ENCODE measurements at regions of chr5 and their contacts with region 1.

Region 1: DNA sequence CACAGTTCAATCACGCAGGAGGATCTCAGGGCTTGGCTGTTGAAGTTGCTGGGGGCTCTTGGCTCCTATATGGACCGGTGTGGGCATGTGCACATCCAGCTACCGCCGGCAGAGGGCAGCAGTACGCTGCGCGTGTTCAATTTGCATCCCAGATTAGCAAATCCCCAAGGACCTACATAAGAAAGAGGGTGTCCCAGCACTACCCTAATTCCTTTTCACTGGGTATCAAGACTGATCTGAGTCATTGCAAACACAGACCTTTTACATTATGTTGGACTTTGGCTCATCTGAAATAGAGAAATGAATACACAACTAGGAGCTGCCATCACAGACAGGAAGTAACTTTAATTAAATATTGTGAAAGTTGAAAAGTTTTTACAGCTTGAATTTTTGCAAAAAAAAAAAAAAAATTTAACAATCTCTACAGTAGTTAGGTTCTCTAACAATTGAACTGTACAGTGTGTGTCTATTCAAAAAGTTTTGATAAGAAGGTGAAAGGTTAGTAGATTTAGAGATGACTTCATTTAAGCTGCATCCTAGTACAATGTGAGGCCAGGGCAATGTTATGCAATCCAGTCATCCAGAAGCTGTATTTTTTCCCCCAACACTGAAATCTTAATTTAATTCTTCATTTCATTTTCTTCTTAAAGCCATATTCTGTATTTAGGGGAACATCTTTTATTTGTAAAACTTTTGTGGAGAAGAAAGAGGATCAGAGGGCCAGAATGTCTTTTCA is 404.0 kb downstream of the EBF1 start:
- DNase-seq: peak; percentile 68 to 70
- H3K4me3 ChIP-seq: no peak overlapping the region
- H3K27ac ChIP-seq: no peak overlapping the region
- H3K4me1 ChIP-seq: peaks cover 0 to 7% of the 10 kb centered on the region in 2 donors
- H3K27me3 ChIP-seq: no peaks in the 10 kb centered on the region
- CTCF ChIP-seq: peak; percentile 88 to 96 (median 92)
- POLR2A ChIP-seq: no peak

Region 2: GRCh38 chr5:158174918-158175851 is 520.6 kb before region 1 on chr5:
- intact Hi-C with region 1: loop called (anchors 10 kb)
- DNase-seq: peak; percentile 63 to 72
- H3K4me3 ChIP-seq: no peak overlapping the region
- H3K27ac ChIP-seq: no peak overlapping the region
- H3K4me1 ChIP-seq: no peaks in the 10 kb centered on the region
- H3K27me3 ChIP-seq: no peaks in the 10 kb centered on the region
- CTCF ChIP-seq: peak; percentile 33 to 87 (median 63)
- POLR2A ChIP-seq: no peak

Region 3: DNA sequence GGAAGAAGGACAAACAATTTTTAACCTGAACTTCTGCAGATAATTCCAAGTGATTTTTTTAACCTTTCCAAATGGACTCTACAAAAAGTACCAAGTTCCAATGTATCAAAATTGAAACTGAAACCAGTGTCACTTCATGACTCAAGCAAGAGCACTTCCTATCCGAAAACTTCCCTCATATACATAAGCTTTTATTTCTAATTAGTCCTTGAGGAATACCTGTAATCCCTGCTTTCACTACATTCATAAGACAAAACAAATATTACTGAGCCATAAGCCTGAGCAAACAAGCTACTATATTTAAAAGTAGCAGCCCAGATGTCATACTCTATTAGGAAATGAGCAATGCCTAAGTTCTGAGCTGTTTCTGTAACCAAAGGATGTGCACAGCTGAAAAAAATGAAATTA is 179.5 kb after region 1 on chr5:
- intact Hi-C with region 1: no loop called
- DNase-seq: no peak
- H3K4me3 ChIP-seq: no peak overlapping the region
- H3K27ac ChIP-seq: peak overlapping the region in 1 of 3 donors; percentile 48
- H3K4me1 ChIP-seq: peaks cover 4 to 11% of the 10 kb centered on the region in 2 donors
- H3K27me3 ChIP-seq: no peaks in the 10 kb centered on the region
- CTCF ChIP-seq: no peak
- POLR2A ChIP-seq: no peak

Region 4: GRCh38 chr5:159106569-159107282 is 411.0 kb after region 1 on chr5:
- intact Hi-C with region 1: loop called (anchors 2 kb)
- DNase-seq: peak; percentile 68 to 74
- H3K4me3 ChIP-seq: no peak overlapping the region
- H3K27ac ChIP-seq: no peak overlapping the region
- H3K4me1 ChIP-seq: peaks cover 3 to 5% of the 10 kb centered on the region in 2 donors
- H3K27me3 ChIP-seq: peaks cover 6% of the 10 kb centered on the region
- CTCF ChIP-seq: peak; percentile 78 to 98 (median 86)
- POLR2A ChIP-seq: no peak